Activated CD8-positive, alpha-beta memory T cell treated with anti-CD3 and anti-CD28 coated beads, Interleukin-2, amount 10 ng/mL, durations not matched to agents 7 days and 5 days (primary cell): ENCODE measurements at regions of chr16 and their contacts with region 1.

Region 1: GRCh38 chr16:714558-715476 is at the start of gene METRN:
- DNase-seq: peak; percentile 91
- ATAC-seq: peak; percentile 92
- H3K4me3 Mint-ChIP-seq: peak within 1 kb of the TSS; percentile 60
- H3K27ac Mint-ChIP-seq: no peak within 1 kb of the TSS
- H3K4me1 Mint-ChIP-seq: peaks cover 17% of the 10 kb centered on the region
- H3K27me3 Mint-ChIP-seq: peaks cover 16% of the 10 kb centered on the region
- total RNA-seq, gene METRN: 9.8 to 14.0 TPM

Region 2: DNA sequence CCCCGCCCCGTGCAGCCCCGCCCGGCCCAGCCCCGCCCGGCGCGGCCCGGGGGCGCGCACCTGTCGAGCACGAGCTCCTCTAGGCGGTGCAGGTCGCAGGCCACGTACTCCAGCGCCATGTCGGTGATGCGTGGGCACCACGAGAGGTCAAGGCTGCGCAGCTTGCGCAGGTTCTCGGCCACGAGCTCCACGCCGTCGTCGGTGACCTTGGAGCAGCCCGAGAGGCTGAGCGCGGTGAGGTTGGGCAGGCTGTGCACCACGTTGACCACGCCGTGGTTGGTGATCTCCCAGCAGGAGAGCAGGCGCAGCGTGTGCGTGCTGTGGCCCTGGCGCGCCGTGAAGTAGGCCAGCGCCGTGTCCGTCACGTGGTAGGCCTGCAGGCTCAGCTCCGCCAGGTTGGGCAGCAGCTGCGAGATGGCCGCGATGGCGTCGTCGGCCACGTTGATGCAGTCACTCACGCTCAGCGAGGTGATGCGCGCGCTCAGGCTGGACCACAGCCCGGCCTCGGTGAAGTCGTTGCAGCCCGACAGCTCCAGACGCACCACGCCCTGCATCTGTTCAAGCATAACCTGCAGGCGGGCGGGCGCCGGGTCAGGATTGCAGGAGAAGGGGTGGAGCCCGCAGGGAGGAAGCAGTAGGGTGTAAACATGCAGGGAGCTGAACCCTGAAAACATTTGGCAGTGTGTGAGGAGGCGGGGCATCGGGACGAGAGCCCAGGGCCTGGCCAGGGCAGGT is 19.3 kb before region 1 on chr16:
- CTCF ChIA-PET with region 1: interaction called, 24 read pairs
- DNase-seq: peak; percentile 80
- ATAC-seq: peak; percentile 81
- H3K4me3 Mint-ChIP-seq: peak overlapping the region; percentile 77
- H3K27ac Mint-ChIP-seq: peak overlapping the region; percentile 79
- H3K4me1 Mint-ChIP-seq: peaks cover 30% of the 10 kb centered on the region
- H3K27me3 Mint-ChIP-seq: peaks cover 16% of the 10 kb centered on the region

Region 3: DNA sequence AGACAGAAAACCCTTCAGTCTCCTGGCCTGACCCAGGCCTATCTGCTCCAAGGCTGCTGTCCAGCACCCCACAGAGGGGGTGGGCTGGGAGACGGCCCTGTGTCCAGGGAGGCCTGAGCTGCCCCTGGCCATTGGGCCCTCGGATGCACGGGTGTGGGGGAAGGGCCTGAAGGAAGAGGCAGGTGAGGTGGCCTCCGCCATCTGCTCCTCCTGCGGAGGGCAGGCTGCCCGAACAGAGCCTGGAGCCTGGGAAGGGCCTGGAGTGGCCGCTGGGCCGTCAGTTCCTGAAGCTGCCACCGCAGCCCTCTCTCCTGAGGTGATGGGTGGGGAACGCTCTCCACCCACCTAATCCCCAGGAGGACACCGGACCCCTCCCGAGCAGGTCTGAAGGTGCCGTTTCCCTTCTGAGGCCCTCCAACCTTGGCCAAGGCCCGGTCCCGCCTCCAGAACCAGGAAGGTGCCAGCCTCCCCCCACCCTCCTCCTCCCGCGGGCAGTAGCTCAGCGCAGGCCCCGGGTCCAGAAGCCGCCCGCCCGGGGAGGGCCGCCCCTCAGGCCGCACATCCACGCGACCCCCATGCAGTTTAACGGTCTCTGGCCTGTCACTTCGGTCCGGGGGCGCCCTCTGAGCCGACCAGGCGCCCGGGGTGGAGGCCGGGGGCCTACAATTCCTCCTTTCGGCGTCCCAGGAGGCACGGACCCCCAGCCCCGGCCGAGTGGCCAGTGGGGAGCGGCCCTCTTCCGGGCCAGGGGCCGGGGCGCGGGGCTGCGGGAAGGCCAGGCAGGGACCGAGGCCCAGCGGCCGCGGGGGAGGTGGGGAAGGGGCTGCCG is 10.1 kb before region 1 on chr16:
- CTCF ChIA-PET with region 1: interaction called, 14 read pairs
- DNase-seq: no peak
- ATAC-seq: no peak
- H3K4me3 Mint-ChIP-seq: no peak overlapping the region
- H3K27ac Mint-ChIP-seq: no peak overlapping the region
- H3K4me1 Mint-ChIP-seq: peaks cover 2% of the 10 kb centered on the region
- H3K27me3 Mint-ChIP-seq: peaks cover 69% of the 10 kb centered on the region

Region 4: DNA sequence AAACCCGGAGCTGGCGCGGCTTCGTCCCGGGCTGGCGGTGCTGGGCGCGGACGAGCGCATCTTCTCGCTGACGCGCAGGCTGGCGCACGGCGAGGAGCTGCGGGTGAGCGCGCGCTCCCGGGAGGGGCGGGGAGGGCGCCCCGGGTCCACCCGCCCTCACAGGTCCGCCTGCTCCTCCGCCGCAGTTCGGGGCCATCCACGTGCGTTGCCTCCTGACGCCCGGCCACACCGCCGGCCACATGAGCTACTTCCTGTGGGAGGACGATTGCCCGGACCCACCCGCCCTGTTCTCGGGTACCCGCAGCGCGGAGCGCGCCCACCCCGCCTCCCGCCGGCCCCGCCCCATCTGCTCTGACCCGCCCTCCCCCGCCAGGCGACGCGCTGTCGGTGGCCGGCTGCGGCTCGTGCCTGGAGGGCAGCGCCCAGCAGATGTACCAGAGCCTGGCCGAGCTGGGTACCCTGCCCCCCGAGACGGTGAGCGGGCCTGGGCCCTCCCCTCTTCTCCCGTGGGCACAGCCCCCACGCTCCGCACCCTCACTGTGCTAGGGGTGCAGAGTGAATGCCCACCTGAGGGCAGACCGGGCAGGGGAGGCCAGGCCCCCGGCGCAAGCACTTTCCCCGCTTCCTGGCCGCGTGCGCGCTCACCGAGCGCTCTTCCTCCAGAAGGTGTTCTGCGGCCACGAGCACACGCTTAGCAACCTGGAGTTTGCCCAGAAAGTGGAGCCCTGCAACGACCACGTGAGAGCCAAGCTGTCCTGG is 13.5 kb after region 1 on chr16:
- CTCF ChIA-PET with region 1: interaction called, 33 read pairs
- DNase-seq: peak; percentile 79
- ATAC-seq: peak; percentile 71
- H3K4me3 Mint-ChIP-seq: no peak overlapping the region
- H3K27ac Mint-ChIP-seq: no peak overlapping the region
- H3K4me1 Mint-ChIP-seq: peaks cover 4% of the 10 kb centered on the region
- H3K27me3 Mint-ChIP-seq: no peaks in the 10 kb centered on the region

Region 5: DNA sequence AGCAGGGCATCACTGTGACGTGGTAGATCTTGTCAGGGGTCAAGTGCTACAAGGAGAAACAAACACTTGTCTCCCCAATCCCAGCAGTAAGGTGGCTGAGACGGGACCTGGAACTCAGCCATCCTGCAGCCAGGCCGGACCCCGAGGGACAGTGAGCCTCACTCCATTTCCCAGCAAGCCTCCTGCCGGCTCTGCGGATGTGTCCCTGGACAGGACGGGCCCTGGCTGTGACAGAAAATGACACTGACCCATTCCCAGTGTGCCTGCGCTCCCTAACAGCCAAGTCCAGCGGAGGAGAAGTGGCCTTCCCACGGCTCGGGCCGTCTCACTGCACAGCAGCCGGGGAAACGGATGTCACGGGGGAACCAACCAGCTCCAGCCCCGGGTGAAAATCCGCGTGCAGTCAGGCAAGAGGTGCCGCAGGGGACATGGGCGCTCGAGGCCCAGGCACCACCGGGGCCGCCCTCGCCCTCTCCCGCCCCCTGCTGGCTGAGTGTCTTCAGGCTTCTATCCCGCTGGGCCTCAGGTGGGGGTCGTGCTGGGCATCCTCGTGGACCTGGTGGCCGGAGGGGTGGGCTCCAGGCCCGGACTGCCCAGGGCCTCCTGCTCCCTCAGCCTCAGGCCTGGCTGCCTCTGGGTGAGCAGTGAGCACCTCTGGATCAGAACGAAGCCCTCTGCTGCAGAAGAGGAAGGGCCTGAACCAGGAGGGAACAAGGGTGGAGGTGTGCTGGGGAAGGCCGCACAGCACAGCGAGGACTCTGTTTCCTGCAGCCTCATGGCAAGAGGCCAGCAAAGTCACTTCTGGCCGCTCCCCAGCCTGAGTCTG is 18.8 kb after region 1 on chr16:
- CTCF ChIA-PET with region 1: interaction called, 33 read pairs
- DNase-seq: peak; percentile 45
- ATAC-seq: no peak
- H3K4me3 Mint-ChIP-seq: no peak overlapping the region
- H3K27ac Mint-ChIP-seq: no peak overlapping the region
- H3K4me1 Mint-ChIP-seq: peaks cover 36% of the 10 kb centered on the region
- H3K27me3 Mint-ChIP-seq: no peaks in the 10 kb centered on the region

Region 6: GRCh38 chr16:740764-741505 is 26.1 kb after region 1 on chr16 and contains the start of gene CIAO3:
- CTCF ChIA-PET with region 1: interaction called, 21 read pairs
- DNase-seq: peak; percentile 94
- ATAC-seq: peak; percentile 88
- H3K4me3 Mint-ChIP-seq: peak within 1 kb of the TSS; percentile 74
- H3K27ac Mint-ChIP-seq: peak within 1 kb of the TSS; percentile 57
- H3K4me1 Mint-ChIP-seq: peaks cover 29% of the 10 kb centered on the region
- H3K27me3 Mint-ChIP-seq: no peaks in the 10 kb centered on the region
- total RNA-seq, gene CIAO3: 34.8 to 37.0 TPM

Region 7: GRCh38 chr16:788394-789126 is 73.7 kb after region 1 on chr16 and contains the start of gene CHTF18:
- CTCF ChIA-PET with region 1: interaction called, 116 read pairs
- DNase-seq: peak; percentile 94
- ATAC-seq: peak; percentile 95
- H3K4me3 Mint-ChIP-seq: peak within 1 kb of the TSS; percentile 84
- H3K27ac Mint-ChIP-seq: peak within 1 kb of the TSS; percentile 78
- H3K4me1 Mint-ChIP-seq: peaks cover 19% of the 10 kb centered on the region
- H3K27me3 Mint-ChIP-seq: no peaks in the 10 kb centered on the region
- total RNA-seq, gene CHTF18: 125 to 139 TPM